ENCODE measurements at regions of chr20 and their contacts with region 1.

Region 1: DNA sequence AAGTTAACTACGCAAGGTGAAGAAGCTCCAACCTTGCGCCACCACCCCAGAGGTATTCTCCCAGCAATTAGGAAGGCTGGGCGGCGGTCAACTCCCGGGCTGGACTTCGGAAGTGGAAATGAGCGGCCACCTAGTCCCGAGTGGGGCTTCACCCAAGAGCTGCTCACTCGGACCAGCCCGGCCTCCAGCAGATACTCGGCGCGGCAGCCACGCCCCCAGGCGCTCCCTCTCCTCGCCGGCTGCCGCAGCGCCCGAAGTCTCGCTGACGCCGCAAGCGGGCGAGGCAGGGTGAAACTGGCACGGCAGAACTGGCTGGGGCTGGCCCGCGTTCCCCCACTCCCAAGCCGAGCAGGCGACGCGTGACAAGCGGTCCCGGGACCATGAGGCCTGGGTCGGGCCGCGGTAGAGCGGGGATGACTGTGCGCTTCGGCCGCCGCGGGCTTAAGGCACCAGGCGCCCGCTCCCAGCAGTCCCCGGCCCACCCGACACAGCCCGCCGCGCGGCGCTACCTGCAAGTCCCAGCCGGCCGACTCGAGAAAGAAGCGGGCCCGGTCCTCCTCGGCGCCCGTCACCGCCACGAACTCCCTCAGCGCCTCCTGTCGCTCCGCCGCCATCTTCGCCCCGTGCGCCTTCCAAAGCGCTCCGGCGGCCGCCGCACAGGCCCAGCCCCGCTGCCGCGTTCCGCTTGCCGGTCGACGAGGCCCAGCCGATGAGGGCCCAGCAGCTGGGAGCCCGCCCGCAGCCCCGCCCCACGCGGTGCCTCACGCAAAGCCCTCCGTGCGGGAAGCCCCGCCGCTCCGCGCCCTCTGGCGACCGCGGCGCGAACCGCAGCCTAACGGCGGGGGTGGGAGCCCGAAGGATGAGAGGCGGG is at the start of gene NSFL1C:
- DNase-seq: peak; percentile 50
- ATAC-seq: peak; percentile 95
- H3K4me3 ChIP-seq: peak within 1 kb of the TSS; percentile 63 to 88
- H3K27ac ChIP-seq: peak within 1 kb of the TSS; percentile 89
- H3K4me1 ChIP-seq: peaks cover 31% of the 10 kb centered on the region
- H3K27me3 ChIP-seq: no peaks in the 10 kb centered on the region
- CTCF ChIP-seq: peak; percentile 99
- total RNA-seq, gene NSFL1C: 151 TPM

Region 2: DNA sequence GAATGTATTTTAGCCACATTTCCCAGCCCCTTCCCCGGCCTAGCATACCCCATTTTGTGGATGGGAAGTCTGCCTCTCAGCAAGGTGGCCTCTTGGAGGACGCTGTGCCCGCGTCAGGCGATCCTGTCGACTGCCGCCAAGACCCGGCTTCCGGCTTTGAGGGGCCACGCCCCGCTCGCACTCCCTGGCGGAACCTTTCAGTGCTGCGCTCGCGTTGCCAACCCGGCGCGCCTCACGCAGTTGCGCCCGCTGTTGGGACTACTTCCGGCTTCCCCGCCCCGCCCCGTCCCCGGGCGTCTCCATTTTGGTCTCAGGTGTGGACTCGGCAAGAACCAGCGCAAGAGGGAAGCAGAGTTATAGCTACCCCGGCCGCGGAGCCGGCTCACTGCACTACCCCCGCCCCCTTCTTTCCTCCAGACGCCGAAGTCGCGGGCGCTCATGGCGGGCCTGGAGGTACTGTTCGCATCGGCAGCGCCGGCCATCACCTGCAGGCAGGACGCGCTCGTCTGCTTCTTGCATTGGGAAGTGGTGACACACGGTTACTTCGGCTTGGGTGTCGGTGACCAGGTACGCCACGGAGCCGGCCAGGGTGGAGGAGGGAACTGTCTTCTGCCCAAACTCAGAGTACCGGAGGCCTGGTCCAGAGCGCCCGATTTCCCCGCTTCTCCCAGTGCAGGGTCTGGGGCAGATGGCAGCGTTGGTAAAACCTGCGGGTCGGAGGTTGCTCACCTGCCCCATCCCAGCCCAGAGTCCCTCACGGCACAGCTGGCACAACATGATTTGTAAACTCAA is 347.9 kb before region 1 on chr20 and contains the start of gene PSMF1:
- CTCF ChIA-PET with region 1: no interaction called
- POLR2A ChIA-PET with region 1: no interaction called
- in situ Hi-C with region 1: no loop called
- intact Hi-C with region 1: loop called (anchors 2 kb)
- DNase-seq: peak; percentile 65
- ATAC-seq: peak; percentile 99
- H3K4me3 ChIP-seq: peak within 1 kb of the TSS; percentile 98 to 99
- H3K27ac ChIP-seq: peak within 1 kb of the TSS; percentile 91
- H3K4me1 ChIP-seq: peaks cover 42% of the 10 kb centered on the region
- H3K27me3 ChIP-seq: no peaks in the 10 kb centered on the region
- CTCF ChIP-seq: no peak
- total RNA-seq, gene PSMF1: 161 TPM

Region 3: DNA sequence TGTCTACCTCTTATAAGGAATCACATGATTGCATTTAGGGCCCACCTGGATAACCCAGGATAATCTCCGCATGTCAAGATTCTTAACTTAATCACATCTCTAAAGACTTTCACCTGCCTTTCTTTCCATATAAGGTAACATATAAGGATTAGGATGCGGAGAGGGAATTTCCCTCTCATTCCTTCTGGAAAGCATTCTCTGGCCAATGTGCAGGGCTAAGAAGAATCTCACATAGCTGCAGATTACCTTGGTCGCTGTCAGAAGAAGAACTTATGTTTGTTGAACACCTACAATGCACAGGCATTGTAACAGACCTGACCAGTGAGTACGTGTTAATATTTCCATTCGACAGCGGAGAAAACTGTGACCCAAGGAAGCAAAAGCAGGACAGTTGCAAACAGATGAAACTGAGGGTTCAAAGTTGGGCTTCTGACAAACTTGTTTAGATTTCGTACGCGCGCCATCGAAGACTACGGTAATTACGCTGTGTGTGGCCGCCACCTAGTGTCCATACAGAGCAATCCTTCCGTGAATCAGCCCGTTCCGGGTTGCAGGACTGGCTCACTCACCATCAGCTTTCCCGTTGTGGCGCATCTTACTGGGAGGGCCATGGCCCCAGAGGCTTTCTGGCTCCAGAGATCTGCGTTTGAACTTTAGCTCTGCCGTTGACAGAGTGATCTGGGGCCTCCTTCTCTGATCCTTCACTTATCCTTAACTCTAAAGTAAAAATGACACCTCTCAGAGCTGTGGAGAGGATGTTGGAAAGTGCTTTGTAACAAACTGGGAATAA is 253.6 kb before region 1 on chr20:
- CTCF ChIA-PET with region 1: no interaction called
- POLR2A ChIA-PET with region 1: no interaction called
- in situ Hi-C with region 1: no loop called
- intact Hi-C with region 1: loop called (anchors 10 kb)
- DNase-seq: peak; percentile 45
- ATAC-seq: peak; percentile 98
- H3K4me3 ChIP-seq: 0 out of 4 replicates have a peak overlapping the region, but pooled peaks of 1 of the 2 experiments have one; percentile 2
- H3K27ac ChIP-seq: no peak overlapping the region
- H3K4me1 ChIP-seq: 0 out of 2 replicates have a peak, but pooled peaks cover 2% of the 10 kb centered on the region
- H3K27me3 ChIP-seq: peaks cover 19% of the 10 kb centered on the region
- CTCF ChIP-seq: peak; percentile 91

Region 4: GRCh38 chr20:1313236-1313964 is 153.0 kb before region 1 on chr20:
- CTCF ChIA-PET with region 1: interaction called, 10 read pairs
- POLR2A ChIA-PET with region 1: no interaction called
- in situ Hi-C with region 1: no loop called
- intact Hi-C with region 1: no loop called
- DNase-seq: peak; percentile 35
- ATAC-seq: peak; percentile 81
- H3K4me3 ChIP-seq: no peak overlapping the region
- H3K27ac ChIP-seq: peak overlapping the region; percentile 11; the same call in 1 of the 2 replicates
- H3K4me1 ChIP-seq: peaks cover 9% of the 10 kb centered on the region; the same call in 1 of the 2 replicates
- H3K27me3 ChIP-seq: no peaks in the 10 kb centered on the region
- CTCF ChIP-seq: peak; percentile 95

Region 5: GRCh38 chr20:1325173-1326030 is 141.0 kb before region 1 on chr20:
- CTCF ChIA-PET with region 1: interaction called, 9 read pairs
- POLR2A ChIA-PET with region 1: no interaction called
- in situ Hi-C with region 1: no loop called
- intact Hi-C with region 1: loop called (anchors 5 kb)
- DNase-seq: peak; percentile 80
- ATAC-seq: peak; percentile 94
- H3K4me3 ChIP-seq: peak overlapping the region; percentile 91 to 96
- H3K27ac ChIP-seq: peak overlapping the region; percentile 96
- H3K4me1 ChIP-seq: peaks cover 41% of the 10 kb centered on the region
- H3K27me3 ChIP-seq: no peaks in the 10 kb centered on the region
- CTCF ChIP-seq: no peak

Region 6: GRCh38 chr20:1392823-1393506 is 73.5 kb before region 1 on chr20 and contains the start of gene FKBP1A:
- CTCF ChIA-PET with region 1: no interaction called
- POLR2A ChIA-PET with region 1: interaction called, 14 read pairs
- in situ Hi-C with region 1: no loop called
- intact Hi-C with region 1: no loop called
- DNase-seq: peak; percentile 75
- ATAC-seq: peak; percentile 96
- H3K4me3 ChIP-seq: peak within 1 kb of the TSS; percentile 75 to 92
- H3K27ac ChIP-seq: peak within 1 kb of the TSS; percentile 97
- H3K4me1 ChIP-seq: peaks cover 35% of the 10 kb centered on the region
- H3K27me3 ChIP-seq: no peaks in the 10 kb centered on the region
- CTCF ChIP-seq: no peak
- total RNA-seq, gene FKBP1A: 695 TPM

Region 7: DNA sequence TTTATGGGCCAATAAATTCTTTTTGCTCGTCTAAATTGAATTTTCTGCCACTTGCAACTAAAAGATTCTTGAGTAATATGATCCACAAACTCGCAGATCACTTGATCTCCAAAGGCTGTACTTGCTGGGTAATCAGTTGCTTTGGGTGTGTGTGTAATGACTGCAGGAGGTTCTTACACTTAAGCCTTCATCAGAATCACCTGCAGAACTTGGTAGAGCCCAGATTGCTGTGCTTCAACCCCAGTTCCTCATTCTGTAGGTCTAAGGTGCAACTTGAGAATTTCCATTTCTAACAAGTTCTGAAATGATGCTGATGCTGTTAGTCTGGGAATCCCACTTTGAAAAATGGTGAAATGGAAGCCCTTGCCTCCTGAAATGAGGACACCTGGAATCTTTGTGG is 60.6 kb before region 1 on chr20:
- CTCF ChIA-PET with region 1: no interaction called
- POLR2A ChIA-PET with region 1: no interaction called
- in situ Hi-C with region 1: no loop called
- intact Hi-C with region 1: no loop called
- DNase-seq: no peak
- ATAC-seq: no peak
- H3K4me3 ChIP-seq: no peak overlapping the region
- H3K27ac ChIP-seq: peak overlapping the region; percentile 80
- H3K4me1 ChIP-seq: peaks cover 17% of the 10 kb centered on the region
- H3K27me3 ChIP-seq: no peaks in the 10 kb centered on the region
- CTCF ChIP-seq: no peak

Region 8: GRCh38 chr20:1503564-1504227 is 37.2 kb after region 1 on chr20:
- CTCF ChIA-PET with region 1: interaction called, 16 read pairs
- POLR2A ChIA-PET with region 1: no interaction called
- in situ Hi-C with region 1: no loop called
- intact Hi-C with region 1: no loop called
- DNase-seq: peak; percentile 91
- ATAC-seq: peak; percentile 100
- H3K4me3 ChIP-seq: no peak overlapping the region
- H3K27ac ChIP-seq: no peak overlapping the region
- H3K4me1 ChIP-seq: peaks cover 3% of the 10 kb centered on the region; the same call in 1 of the 2 replicates
- H3K27me3 ChIP-seq: peaks cover 30% of the 10 kb centered on the region
- CTCF ChIP-seq: peak; percentile 99

Measured in Panc1 (cell line).